ENCODE measurements at regions of chr10 and their contacts with region 1.

Region 1: GRCh38 chr10:80211786-80212185 is 6.4 kb upstream of the ANXA11 start:
- DNase-seq: no peak
- H3K4me3 ChIP-seq: no peak overlapping the region
- H3K27ac ChIP-seq: no peak overlapping the region
- H3K4me1 ChIP-seq: peaks cover 12 to 34% (median 17%) of the 10 kb centered on the region in 4 donors
- H3K27me3 ChIP-seq: no peaks in the 10 kb centered on the region
- CTCF ChIP-seq: no peak
- EP300 ChIP-seq: no peak
- POLR2A ChIP-seq: no peak

Region 2: DNA sequence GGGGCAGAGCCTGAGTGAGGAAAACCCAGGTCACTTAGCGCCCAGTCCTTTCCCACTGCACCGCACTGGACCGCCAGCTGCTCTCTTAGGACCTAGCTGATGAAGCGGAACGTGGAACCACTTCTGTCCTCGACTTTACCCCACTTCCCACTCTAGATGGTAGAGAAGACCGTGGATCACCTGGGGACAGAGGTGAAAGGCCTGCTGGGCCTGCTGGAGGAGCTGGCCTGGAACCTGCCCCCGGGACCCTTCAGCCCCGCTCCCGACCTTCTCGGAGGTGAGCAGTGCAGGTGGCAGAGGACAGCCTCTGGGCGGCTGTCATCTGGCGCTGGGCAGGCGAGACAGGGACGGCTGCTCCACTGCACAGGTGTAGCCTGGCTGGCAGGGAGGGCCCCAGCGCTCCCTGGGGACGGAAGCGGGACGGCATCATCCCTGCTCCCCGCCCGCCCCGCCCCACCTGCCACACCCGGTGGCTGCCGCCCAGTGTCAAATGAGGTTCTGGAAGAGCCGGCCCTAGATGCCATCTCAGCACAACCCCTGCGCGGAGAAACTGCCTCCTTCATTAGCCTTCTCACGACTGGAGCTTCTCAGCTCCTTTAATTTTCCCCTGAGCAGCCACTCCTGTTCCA is 67.6 kb before region 1 on chr10:
- intact Hi-C with region 1: loop called (anchors 5 kb)
- DNase-seq: peak; percentile 44 to 68
- H3K4me3 ChIP-seq: peak overlapping the region; percentile 21 to 34 (median 25)
- H3K27ac ChIP-seq: peak overlapping the region in 3 of 5 donors; percentile 34 to 69 (median 50)
- H3K4me1 ChIP-seq: peaks cover 15 to 23% (median 21%) of the 10 kb centered on the region in 4 donors
- H3K27me3 ChIP-seq: peaks cover 0 to 6% (median 0%) of the 10 kb centered on the region in 3 donors
- CTCF ChIP-seq: no peak
- EP300 ChIP-seq: no peak
- POLR2A ChIP-seq: no peak

Region 3: GRCh38 chr10:80272793-80273517 is 61.2 kb after region 1 on chr10:
- intact Hi-C with region 1: no loop called
- DNase-seq: peak; percentile 23 to 34
- H3K4me3 ChIP-seq: no peak overlapping the region
- H3K27ac ChIP-seq: no peak overlapping the region
- H3K4me1 ChIP-seq: no peaks in the 10 kb centered on the region
- H3K27me3 ChIP-seq: no peaks in the 10 kb centered on the region
- CTCF ChIP-seq: no peak
- EP300 ChIP-seq: no peak
- POLR2A ChIP-seq: no peak

Region 4: GRCh38 chr10:80753612-80754011 is 541.8 kb after region 1 on chr10:
- intact Hi-C with region 1: no loop called
- DNase-seq: no peak
- H3K4me3 ChIP-seq: no peak overlapping the region
- H3K27ac ChIP-seq: no peak overlapping the region
- H3K4me1 ChIP-seq: no peaks in the 10 kb centered on the region
- H3K27me3 ChIP-seq: peaks cover 0 to 4% (median 0%) of the 10 kb centered on the region in 3 donors
- CTCF ChIP-seq: no peak
- EP300 ChIP-seq: no peak
- POLR2A ChIP-seq: no peak

Measured in stomach (tissue), 19 donors.